Adrenal gland (tissue), 19 donors: ENCODE measurements at regions of chr1 and their contacts with region 1.

Region 1: GRCh38 chr1:153494976-153495535 is 34.6 kb upstream of the S100A7 start:
- DNase-seq: peak; percentile 62 to 87 (median 77)
- H3K4me3 ChIP-seq: no peak overlapping the region
- H3K27ac ChIP-seq: no peak overlapping the region
- H3K4me1 ChIP-seq: peaks cover 0 to 12% of the 10 kb centered on the region in 2 donors
- H3K27me3 ChIP-seq: no peaks in the 10 kb centered on the region
- CTCF ChIP-seq: peak; percentile 93 to 99 (median 94)
- POLR2A ChIP-seq: no peak

Region 2: GRCh38 chr1:153352523-153352922 is 142.5 kb before region 1 on chr1:
- intact Hi-C with region 1: loop called (anchors 2 to 5 kb)
- DNase-seq: peak; percentile 63 to 90 (median 77)
- H3K4me3 ChIP-seq: no peak overlapping the region
- H3K27ac ChIP-seq: no peak overlapping the region
- H3K4me1 ChIP-seq: no peaks in the 10 kb centered on the region
- H3K27me3 ChIP-seq: peaks cover 26% of the 10 kb centered on the region
- CTCF ChIP-seq: peak; percentile 84 to 96 (median 88)
- POLR2A ChIP-seq: no peak

Region 3: DNA sequence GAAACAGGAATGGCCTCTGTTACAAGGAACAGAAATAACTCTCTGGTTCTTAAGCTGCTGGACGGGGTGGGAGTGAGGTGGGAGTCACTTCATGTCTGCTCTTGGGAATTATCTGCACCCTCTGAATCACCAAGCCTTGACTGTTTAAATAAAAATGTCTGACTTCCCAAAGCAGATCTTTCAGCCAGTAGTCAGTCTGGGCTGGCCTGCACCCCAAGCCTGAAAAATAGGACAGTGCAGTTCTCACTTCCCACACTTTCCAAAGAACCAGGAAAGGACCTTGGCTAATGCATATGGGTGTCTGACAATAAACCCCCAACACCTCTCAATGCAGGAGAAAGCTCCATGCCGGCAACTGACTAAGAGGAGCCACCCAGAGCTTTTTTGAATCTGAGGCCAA is 35.4 kb before region 1 on chr1:
- intact Hi-C with region 1: loop called in 1 of 2 experiments (anchors 5 kb)
- DNase-seq: no peak
- H3K4me3 ChIP-seq: no peak overlapping the region
- H3K27ac ChIP-seq: no peak overlapping the region
- H3K4me1 ChIP-seq: no peaks in the 10 kb centered on the region
- H3K27me3 ChIP-seq: no peaks in the 10 kb centered on the region
- CTCF ChIP-seq: no peak
- POLR2A ChIP-seq: no peak

Region 4: GRCh38 chr1:153816283-153816889 is 321.3 kb after region 1 on chr1:
- intact Hi-C with region 1: no loop called
- DNase-seq: peak in 1 of 7 donors; percentile 35
- H3K4me3 ChIP-seq: no peak overlapping the region
- H3K27ac ChIP-seq: no peak overlapping the region
- H3K4me1 ChIP-seq: peaks cover 0 to 3% of the 10 kb centered on the region in 2 donors
- H3K27me3 ChIP-seq: no peaks in the 10 kb centered on the region
- CTCF ChIP-seq: no peak
- POLR2A ChIP-seq: no peak